CD8-positive, alpha-beta T cell (primary cell): ENCODE measurements at regions of chr2 and their contacts with region 1.

Region 1: DNA sequence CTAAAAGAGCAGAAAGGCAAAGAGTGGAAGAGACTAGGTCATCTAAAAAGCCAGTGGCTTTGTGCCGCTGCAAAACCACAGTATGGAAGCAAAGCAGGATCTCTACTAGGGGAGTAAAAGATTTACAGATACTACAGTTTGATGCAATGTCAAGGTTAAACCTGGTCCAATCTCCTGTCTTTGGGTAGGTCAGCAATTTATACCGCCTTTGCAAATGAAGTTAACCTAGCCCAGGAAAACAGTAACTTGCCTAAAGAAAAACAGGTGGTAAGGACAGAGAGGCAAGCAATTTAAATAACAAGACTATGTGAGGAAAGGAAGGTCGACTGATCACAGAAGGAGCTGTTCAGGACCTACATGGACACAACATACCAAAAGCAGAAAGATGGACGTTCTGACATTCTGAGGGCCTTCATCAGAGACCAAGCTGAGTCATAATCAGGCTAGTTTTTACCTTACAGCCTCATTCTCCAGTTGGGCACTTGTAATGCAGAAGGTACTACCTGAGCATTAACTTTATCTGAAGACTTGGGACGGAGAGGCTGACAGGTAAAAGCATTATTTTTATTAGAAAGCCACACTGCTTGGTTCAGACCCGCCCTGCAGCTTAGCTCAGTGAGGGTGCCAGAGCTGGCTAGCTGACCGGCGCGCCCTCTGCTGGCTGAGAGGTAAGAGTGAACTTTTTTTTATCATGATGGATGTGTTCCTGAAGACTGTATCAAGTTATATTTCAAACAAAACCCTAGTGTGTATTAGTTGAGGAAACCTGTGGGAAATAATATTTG is 15.9 kb downstream of the CDKL4 start:
- DNase-seq: peak; percentile 67 to 90 (median 83)
- ATAC-seq: peak; percentile 90
- H3K4me3 ChIP-seq: peak overlapping the region; percentile 31 to 35
- H3K4me3 Mint-ChIP-seq: peak overlapping the region; percentile 77
- H3K27ac ChIP-seq: no peak overlapping the region
- H3K27ac Mint-ChIP-seq: no peak overlapping the region
- H3K4me1 ChIP-seq: peaks cover 17% of the 10 kb centered on the region
- H3K4me1 Mint-ChIP-seq: peaks cover 19% of the 10 kb centered on the region
- H3K27me3 ChIP-seq: no peaks in the 10 kb centered on the region
- H3K27me3 Mint-ChIP-seq: no peaks in the 10 kb centered on the region
- CTCF ChIP-seq: peak; percentile 76

Region 2: GRCh38 chr2:38653715-38654527 is 573.9 kb before region 1 on chr2:
- CTCF ChIA-PET with region 1: no interaction called
- POLR2A ChIA-PET with region 1: no interaction called
- intact Hi-C with region 1: no loop called
- DNase-seq: peak in 5 of 9 experiments; percentile 25 to 67 (median 46)
- ATAC-seq: peak; percentile 77
- H3K4me3 ChIP-seq: no peak overlapping the region
- H3K4me3 Mint-ChIP-seq: peak overlapping the region; percentile 42
- H3K27ac ChIP-seq: peak overlapping the region in 1 of 2 experiments; percentile 54
- H3K27ac Mint-ChIP-seq: peak overlapping the region; percentile 81
- H3K4me1 ChIP-seq: peaks cover 9% of the 10 kb centered on the region
- H3K4me1 Mint-ChIP-seq: peaks cover 23% of the 10 kb centered on the region
- H3K27me3 ChIP-seq: no peaks in the 10 kb centered on the region
- H3K27me3 Mint-ChIP-seq: no peaks in the 10 kb centered on the region
- CTCF ChIP-seq: no peak

Region 3: GRCh38 chr2:38925982-38926381 is 301.8 kb before region 1 on chr2:
- CTCF ChIA-PET with region 1: no interaction called
- POLR2A ChIA-PET with region 1: no interaction called
- intact Hi-C with region 1: no loop called
- DNase-seq: no peak
- ATAC-seq: no peak
- H3K4me3 ChIP-seq: no peak overlapping the region
- H3K4me3 Mint-ChIP-seq: no peak overlapping the region
- H3K27ac ChIP-seq: no peak overlapping the region
- H3K27ac Mint-ChIP-seq: no peak overlapping the region
- H3K4me1 ChIP-seq: no peaks in the 10 kb centered on the region
- H3K4me1 Mint-ChIP-seq: no peaks in the 10 kb centered on the region
- H3K27me3 ChIP-seq: no peaks in the 10 kb centered on the region
- H3K27me3 Mint-ChIP-seq: no peaks in the 10 kb centered on the region
- CTCF ChIP-seq: no peak

Region 4: DNA sequence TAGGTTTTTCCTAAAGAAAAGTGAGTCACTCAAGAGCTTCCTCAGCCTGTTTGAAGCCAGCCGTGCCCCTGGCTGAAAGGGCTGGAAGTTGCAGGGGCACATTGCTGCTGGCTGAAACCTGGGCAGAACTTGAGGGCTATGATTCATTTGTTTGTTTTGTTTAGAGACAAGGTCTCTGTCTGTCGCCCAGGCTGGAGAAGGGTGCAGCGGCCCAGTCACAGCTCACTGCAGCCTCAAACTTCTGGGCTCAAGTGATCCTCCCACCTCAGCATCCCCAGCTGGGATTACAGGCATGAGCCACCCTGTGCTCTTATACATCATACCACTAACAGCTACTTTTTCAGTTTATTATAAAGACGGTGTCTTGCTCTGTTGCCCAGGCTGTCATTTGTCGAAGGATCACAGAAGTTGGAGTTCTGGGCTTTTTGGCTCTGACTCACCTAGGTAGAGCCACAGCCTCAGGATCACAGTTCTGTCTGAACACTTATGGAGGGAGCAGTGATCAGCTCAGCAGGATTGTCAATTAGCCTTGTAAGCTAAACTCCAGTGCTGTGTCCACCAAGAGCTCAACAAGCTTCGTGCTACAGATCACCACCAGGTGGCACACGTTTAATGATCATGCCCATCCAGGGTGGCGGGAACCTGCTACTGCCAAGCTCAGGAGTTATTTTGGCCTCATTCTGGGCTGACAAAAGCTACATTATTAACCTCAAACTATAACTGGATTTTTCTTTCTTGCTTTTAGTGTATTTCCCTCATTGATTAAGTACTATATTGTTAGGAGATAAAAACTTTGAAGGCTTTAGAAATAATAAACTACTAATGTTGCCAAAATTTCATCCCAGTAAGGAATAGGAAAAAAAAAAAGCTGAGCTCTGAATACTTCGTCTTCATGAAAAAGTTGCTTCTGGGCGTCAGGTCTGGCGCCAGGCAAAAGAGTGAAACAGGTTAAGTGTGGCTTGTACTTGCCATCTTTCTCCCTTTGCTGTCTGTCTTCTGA is 280.3 kb before region 1 on chr2:
- CTCF ChIA-PET with region 1: interaction called, 117 read pairs
- POLR2A ChIA-PET with region 1: interaction called, 4 read pairs
- intact Hi-C with region 1: loop called in 1 of 2 experiments (anchors 1 kb)
- DNase-seq: peak in 8 of 9 experiments; percentile 39 to 73 (median 56)
- ATAC-seq: no peak
- H3K4me3 ChIP-seq: no peak overlapping the region
- H3K4me3 Mint-ChIP-seq: no peak overlapping the region
- H3K27ac ChIP-seq: no peak overlapping the region
- H3K27ac Mint-ChIP-seq: no peak overlapping the region
- H3K4me1 ChIP-seq: no peaks in the 10 kb centered on the region
- H3K4me1 Mint-ChIP-seq: no peaks in the 10 kb centered on the region
- H3K27me3 ChIP-seq: no peaks in the 10 kb centered on the region
- H3K27me3 Mint-ChIP-seq: no peaks in the 10 kb centered on the region
- CTCF ChIP-seq: peak; percentile 44

Region 5: GRCh38 chr2:39069136-39069515 is 158.7 kb before region 1 on chr2:
- CTCF ChIA-PET with region 1: interaction called, 268 read pairs
- POLR2A ChIA-PET with region 1: no interaction called
- intact Hi-C with region 1: no loop called
- DNase-seq: peak in 2 of 9 experiments; percentile 10 to 26
- ATAC-seq: peak; percentile 31
- H3K4me3 ChIP-seq: no peak overlapping the region
- H3K4me3 Mint-ChIP-seq: no peak overlapping the region
- H3K27ac ChIP-seq: no peak overlapping the region
- H3K27ac Mint-ChIP-seq: peak overlapping the region; percentile 32
- H3K4me1 ChIP-seq: no peaks in the 10 kb centered on the region
- H3K4me1 Mint-ChIP-seq: peaks cover 31% of the 10 kb centered on the region
- H3K27me3 ChIP-seq: no peaks in the 10 kb centered on the region
- H3K27me3 Mint-ChIP-seq: no peaks in the 10 kb centered on the region
- CTCF ChIP-seq: peak; percentile 24

Region 6: DNA sequence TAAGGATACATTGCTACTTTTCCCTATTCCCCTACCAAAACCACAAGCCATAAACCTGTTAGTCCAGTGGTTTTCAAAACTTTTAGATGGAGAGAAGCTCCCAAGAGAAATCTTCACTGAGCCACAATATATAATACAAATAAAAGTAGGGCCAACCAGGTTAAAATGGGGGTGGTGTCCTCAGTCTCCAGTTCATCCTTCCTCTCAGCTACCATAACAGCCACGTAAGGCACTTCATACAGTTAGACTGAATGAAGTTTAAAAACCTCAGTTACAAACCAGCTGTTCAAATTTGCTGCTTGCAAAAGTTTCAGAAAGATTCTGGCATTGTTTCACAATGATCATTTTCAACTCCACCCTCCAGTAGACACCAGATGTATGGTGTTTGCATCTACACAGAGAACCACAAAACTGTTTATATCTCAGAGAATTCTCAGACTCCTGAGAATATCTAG is 132.9 kb before region 1 on chr2:
- CTCF ChIA-PET with region 1: interaction called, 18 read pairs
- POLR2A ChIA-PET with region 1: interaction called, 4 read pairs
- intact Hi-C with region 1: no loop called
- DNase-seq: no peak
- ATAC-seq: no peak
- H3K4me3 ChIP-seq: no peak overlapping the region
- H3K4me3 Mint-ChIP-seq: no peak overlapping the region
- H3K27ac ChIP-seq: no peak overlapping the region
- H3K27ac Mint-ChIP-seq: peak overlapping the region; percentile 23
- H3K4me1 ChIP-seq: peaks cover 12% of the 10 kb centered on the region
- H3K4me1 Mint-ChIP-seq: peaks cover 66% of the 10 kb centered on the region
- H3K27me3 ChIP-seq: no peaks in the 10 kb centered on the region
- H3K27me3 Mint-ChIP-seq: no peaks in the 10 kb centered on the region
- CTCF ChIP-seq: no peak

Region 7: DNA sequence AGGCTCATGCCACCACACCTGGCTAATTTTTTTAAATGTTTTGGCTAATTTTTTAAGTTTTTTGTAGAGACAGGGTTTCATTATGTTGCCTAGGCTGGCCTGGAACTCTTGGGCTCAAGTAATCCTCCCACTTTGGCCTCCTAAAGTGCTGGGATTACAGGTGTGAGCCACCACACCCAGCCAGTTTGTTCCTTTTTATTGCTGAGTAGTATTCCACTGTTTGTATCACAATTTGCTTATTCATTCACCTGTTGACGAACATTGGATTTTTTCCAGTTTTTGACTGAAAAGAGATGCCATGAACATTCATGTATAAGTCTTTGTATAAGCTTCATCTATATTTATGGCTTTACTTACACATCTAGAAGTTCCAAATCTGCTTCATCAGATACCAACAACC is 112.3 kb before region 1 on chr2:
- CTCF ChIA-PET with region 1: interaction called, 219 read pairs
- POLR2A ChIA-PET with region 1: interaction called, 71 read pairs
- intact Hi-C with region 1: loop called in 1 of 2 experiments (anchors 1 kb)
- DNase-seq: no peak
- ATAC-seq: no peak
- H3K4me3 ChIP-seq: no peak overlapping the region
- H3K4me3 Mint-ChIP-seq: no peak overlapping the region
- H3K27ac ChIP-seq: no peak overlapping the region
- H3K27ac Mint-ChIP-seq: no peak overlapping the region
- H3K4me1 ChIP-seq: peaks cover 14% of the 10 kb centered on the region
- H3K4me1 Mint-ChIP-seq: peaks cover 70% of the 10 kb centered on the region
- H3K27me3 ChIP-seq: no peaks in the 10 kb centered on the region
- H3K27me3 Mint-ChIP-seq: no peaks in the 10 kb centered on the region
- CTCF ChIP-seq: no peak

Region 8: GRCh38 chr2:39210846-39211245 is 17.0 kb before region 1 on chr2:
- CTCF ChIA-PET with region 1: interaction called, 47 read pairs
- POLR2A ChIA-PET with region 1: no interaction called
- intact Hi-C with region 1: no loop called
- DNase-seq: no peak
- ATAC-seq: no peak
- H3K4me3 ChIP-seq: no peak overlapping the region
- H3K4me3 Mint-ChIP-seq: no peak overlapping the region
- H3K27ac ChIP-seq: no peak overlapping the region
- H3K27ac Mint-ChIP-seq: no peak overlapping the region
- H3K4me1 ChIP-seq: peaks cover 9% of the 10 kb centered on the region
- H3K4me1 Mint-ChIP-seq: peaks cover 13% of the 10 kb centered on the region
- H3K27me3 ChIP-seq: no peaks in the 10 kb centered on the region
- H3K27me3 Mint-ChIP-seq: no peaks in the 10 kb centered on the region
- CTCF ChIP-seq: no peak

Region 9: GRCh38 chr2:39246382-39246980 is 18.7 kb after region 1 on chr2:
- CTCF ChIA-PET with region 1: interaction called, 12 read pairs
- POLR2A ChIA-PET with region 1: no interaction called
- intact Hi-C with region 1: no loop called
- DNase-seq: no peak
- ATAC-seq: no peak
- H3K4me3 ChIP-seq: no peak overlapping the region
- H3K4me3 Mint-ChIP-seq: peak overlapping the region; percentile 3
- H3K27ac ChIP-seq: no peak overlapping the region
- H3K27ac Mint-ChIP-seq: peak overlapping the region; percentile 7
- H3K4me1 ChIP-seq: peaks cover 4% of the 10 kb centered on the region
- H3K4me1 Mint-ChIP-seq: peaks cover 21% of the 10 kb centered on the region
- H3K27me3 ChIP-seq: no peaks in the 10 kb centered on the region
- H3K27me3 Mint-ChIP-seq: no peaks in the 10 kb centered on the region
- CTCF ChIP-seq: no peak